CD8-positive, alpha-beta memory T cell (primary cell): ENCODE measurements at regions of chr6 and their contacts with region 1.

Region 1: DNA sequence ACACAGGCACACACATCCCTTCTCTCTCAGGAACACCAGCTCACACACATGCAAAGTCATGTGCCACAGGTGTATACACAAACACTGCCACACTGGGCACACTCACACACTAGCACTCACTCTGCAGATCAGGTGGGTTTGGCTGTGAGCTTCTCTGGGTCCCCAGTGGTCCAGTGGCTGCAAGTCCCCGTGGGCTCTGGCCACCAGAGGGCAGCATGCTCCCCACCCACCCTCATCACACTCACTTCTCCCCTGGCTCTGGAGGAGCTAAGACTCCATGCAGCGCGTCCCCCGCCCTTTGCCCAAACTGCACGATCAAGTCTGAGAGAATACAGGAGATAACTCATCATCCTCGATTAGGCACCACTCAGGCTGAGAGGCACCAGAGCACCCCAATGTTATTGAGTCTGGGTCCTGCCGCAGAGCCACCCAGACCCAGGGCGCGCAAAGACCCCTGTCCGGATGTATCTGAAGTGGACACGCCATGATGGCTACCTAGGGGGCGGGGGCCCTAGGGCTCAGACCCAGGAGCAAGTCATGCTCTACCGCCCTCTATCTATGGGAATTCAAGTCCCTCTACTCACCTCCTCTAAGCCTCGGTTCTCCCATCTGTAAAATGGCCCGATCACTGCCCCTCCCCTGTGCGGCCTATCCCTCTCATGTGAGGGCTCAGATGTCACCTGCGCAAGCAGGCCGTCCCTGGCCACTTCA is 90.5 kb downstream of the GRM4 start:
- DNase-seq: peak; percentile 20 to 68 (median 37)
- H3K4me3 ChIP-seq: no peak overlapping the region
- H3K4me3 Mint-ChIP-seq: no peak overlapping the region
- H3K27ac ChIP-seq: no peak overlapping the region
- H3K27ac Mint-ChIP-seq: peak overlapping the region in 1 of 8 donors; percentile 56
- H3K4me1 ChIP-seq: no peaks in the 10 kb centered on the region
- H3K4me1 Mint-ChIP-seq: peaks cover 0 to 10% (median 4%) of the 10 kb centered on the region in 3 donors
- H3K27me3 ChIP-seq: no peaks in the 10 kb centered on the region
- H3K27me3 Mint-ChIP-seq: peaks cover 4 to 18% of the 10 kb centered on the region in 2 donors

Region 2: GRCh38 chr6:34154668-34155447 is 99.5 kb after region 1 on chr6:
- CTCF ChIA-PET with region 1: interaction called, 19 read pairs
- POLR2A ChIA-PET with region 1: no interaction called
- DNase-seq: peak; percentile 37 to 70 (median 49)
- H3K4me3 ChIP-seq: peak overlapping the region; percentile 39
- H3K4me3 Mint-ChIP-seq: peak overlapping the region in 4 of 7 donors; percentile 9 to 59 (median 52)
- H3K27ac ChIP-seq: no peak overlapping the region
- H3K27ac Mint-ChIP-seq: no peak overlapping the region
- H3K4me1 ChIP-seq: peaks cover 7% of the 10 kb centered on the region
- H3K4me1 Mint-ChIP-seq: peaks cover 2 to 7% (median 6%) of the 10 kb centered on the region in 3 donors
- H3K27me3 ChIP-seq: peaks cover 29% of the 10 kb centered on the region
- H3K27me3 Mint-ChIP-seq: peaks cover 36 to 44% of the 10 kb centered on the region in 2 donors